Heart right ventricle (tissue), 16 donors: ENCODE measurements at regions of chr11 and their contacts with region 1.

Region 1: GRCh38 chr11:10864688-10865087 is 6.8 kb upstream of the ZBED5 start:
- DNase-seq: no peak
- ATAC-seq: peak in 4 of 8 donors; percentile 50 to 68 (median 62)
- H3K4me3 ChIP-seq: peak overlapping the region in 2 of 10 donors; percentile 4 to 5
- H3K27ac ChIP-seq: peak overlapping the region; percentile 42 to 79 (median 64)
- H3K4me1 ChIP-seq: peaks cover 0 to 50% (median 32%) of the 10 kb centered on the region in 9 donors
- H3K27me3 ChIP-seq: no peaks in the 10 kb centered on the region
- CTCF ChIP-seq: no peak

Region 2: GRCh38 chr11:10674911-10675440 is 189.7 kb before region 1 on chr11:
- intact Hi-C with region 1: no loop called
- DNase-seq: peak; percentile 34 to 62
- ATAC-seq: peak; percentile 79 to 94 (median 91)
- H3K4me3 ChIP-seq: peak overlapping the region in 7 of 10 donors; percentile 4 to 44 (median 38)
- H3K27ac ChIP-seq: peak overlapping the region; percentile 37 to 82 (median 72)
- H3K4me1 ChIP-seq: peaks cover 5 to 37% (median 23%) of the 10 kb centered on the region in 9 donors
- H3K27me3 ChIP-seq: no peaks in the 10 kb centered on the region
- CTCF ChIP-seq: no peak

Region 3: GRCh38 chr11:10899121-10899830 is 34.6 kb after region 1 on chr11:
- intact Hi-C with region 1: loop called in 5 of 10 experiments (anchors 2 to 10 kb)
- DNase-seq: peak; percentile 46 to 57
- ATAC-seq: peak; percentile 18 to 78 (median 64)
- H3K4me3 ChIP-seq: peak overlapping the region in 1 of 10 donors; percentile 6
- H3K27ac ChIP-seq: peak overlapping the region; percentile 78 to 96 (median 92)
- H3K4me1 ChIP-seq: peaks cover 18 to 59% (median 41%) of the 10 kb centered on the region in 9 donors
- H3K27me3 ChIP-seq: no peaks in the 10 kb centered on the region
- CTCF ChIP-seq: no peak

Region 4: DNA sequence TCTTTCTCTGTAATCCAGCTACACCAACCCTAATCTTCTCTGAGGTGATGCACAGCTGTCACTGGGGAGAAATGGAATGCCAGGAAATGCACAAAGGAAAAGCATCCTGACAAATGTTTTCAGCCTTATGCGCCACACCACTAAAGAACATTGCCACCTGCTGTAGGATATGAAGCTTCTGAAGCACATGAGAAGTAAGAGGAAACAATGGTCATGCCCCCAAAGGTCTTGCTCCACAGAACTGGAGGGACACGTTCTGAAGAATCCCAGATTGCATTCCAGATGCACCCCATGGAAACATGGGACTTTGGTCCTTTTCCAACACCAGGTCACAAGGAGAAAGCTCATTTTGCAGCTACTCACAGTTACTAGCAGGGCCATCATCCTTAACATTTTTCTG is 41.8 kb after region 1 on chr11:
- intact Hi-C with region 1: loop called in 7 of 10 experiments (anchors 2 to 10 kb)
- DNase-seq: no peak
- ATAC-seq: peak in 7 of 8 donors; percentile 9 to 66 (median 41)
- H3K4me3 ChIP-seq: no peak overlapping the region
- H3K27ac ChIP-seq: no peak overlapping the region
- H3K4me1 ChIP-seq: peaks cover 0 to 29% (median 9%) of the 10 kb centered on the region in 9 donors
- H3K27me3 ChIP-seq: no peaks in the 10 kb centered on the region
- CTCF ChIP-seq: peak in 6 of 9 donors; percentile 21 to 54 (median 34)

Region 5: DNA sequence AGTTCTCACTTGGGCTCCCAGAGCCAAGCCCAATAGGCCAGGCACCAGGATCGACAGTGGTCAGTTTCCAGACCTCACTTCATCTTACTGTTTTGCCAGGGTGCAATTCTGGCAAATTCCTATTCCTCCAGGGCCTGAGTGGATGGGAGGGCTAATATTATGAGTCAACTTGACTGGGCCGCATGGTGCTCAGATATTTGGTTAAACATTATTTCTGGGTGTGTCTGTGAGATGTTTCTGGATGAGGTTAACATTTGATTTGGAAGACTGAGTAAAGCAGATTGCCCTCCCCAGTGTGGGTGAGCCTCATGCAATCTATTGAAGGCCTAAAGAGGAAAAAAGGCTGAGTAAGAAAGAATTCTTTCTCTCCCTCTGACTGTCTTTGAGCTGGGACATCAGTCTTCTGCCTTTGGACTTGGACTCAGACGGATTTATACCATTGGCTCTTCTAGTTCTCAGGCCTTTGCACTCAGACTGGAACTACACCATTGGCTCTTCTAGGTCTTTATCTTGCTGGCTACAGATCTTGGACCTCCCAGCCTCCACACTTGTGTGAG is 126.0 kb after region 1 on chr11:
- intact Hi-C with region 1: no loop called
- DNase-seq: no peak
- ATAC-seq: no peak
- H3K4me3 ChIP-seq: no peak overlapping the region
- H3K27ac ChIP-seq: no peak overlapping the region
- H3K4me1 ChIP-seq: no peaks in the 10 kb centered on the region
- H3K27me3 ChIP-seq: no peaks in the 10 kb centered on the region
- CTCF ChIP-seq: no peak

Region 6: DNA sequence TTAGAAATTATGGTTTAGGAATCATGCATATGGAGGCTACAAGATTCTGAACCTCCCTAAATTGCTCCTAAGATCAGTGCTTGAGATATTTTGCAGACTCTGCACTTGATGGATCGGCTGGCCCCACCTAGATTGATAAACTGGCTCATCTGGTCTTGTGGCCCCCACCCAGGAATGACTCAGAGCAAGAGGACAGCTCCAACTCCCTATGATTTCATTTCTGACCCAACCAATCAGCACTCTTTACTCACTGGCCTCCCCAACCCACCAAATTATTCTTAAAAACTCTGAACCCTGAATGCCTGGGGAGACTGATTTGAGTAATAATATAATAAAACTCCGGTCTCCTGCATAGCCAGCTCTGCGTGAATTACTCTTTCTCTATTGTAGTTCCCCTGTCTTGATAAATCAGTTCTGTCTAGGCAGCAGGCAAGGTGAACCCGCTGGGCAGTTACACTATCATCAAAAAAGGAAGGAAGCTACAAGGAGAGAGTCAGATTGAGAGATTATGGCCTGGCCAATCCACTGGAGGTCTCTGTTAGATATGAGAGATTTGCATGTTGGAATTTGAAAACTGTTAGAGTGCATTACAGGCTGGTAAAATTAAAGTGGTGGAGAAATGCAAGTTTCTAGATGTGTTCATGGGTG is 242.5 kb after region 1 on chr11:
- intact Hi-C with region 1: no loop called
- DNase-seq: no peak
- ATAC-seq: no peak
- H3K4me3 ChIP-seq: no peak overlapping the region
- H3K27ac ChIP-seq: no peak overlapping the region
- H3K4me1 ChIP-seq: no peaks in the 10 kb centered on the region
- H3K27me3 ChIP-seq: no peaks in the 10 kb centered on the region
- CTCF ChIP-seq: no peak